Activated B cell treated with CpG ODN at 0.5 μM for 24 hours (primary cell): ENCODE measurements at regions of chr14 and their contacts with region 1.

Region 1: DNA sequence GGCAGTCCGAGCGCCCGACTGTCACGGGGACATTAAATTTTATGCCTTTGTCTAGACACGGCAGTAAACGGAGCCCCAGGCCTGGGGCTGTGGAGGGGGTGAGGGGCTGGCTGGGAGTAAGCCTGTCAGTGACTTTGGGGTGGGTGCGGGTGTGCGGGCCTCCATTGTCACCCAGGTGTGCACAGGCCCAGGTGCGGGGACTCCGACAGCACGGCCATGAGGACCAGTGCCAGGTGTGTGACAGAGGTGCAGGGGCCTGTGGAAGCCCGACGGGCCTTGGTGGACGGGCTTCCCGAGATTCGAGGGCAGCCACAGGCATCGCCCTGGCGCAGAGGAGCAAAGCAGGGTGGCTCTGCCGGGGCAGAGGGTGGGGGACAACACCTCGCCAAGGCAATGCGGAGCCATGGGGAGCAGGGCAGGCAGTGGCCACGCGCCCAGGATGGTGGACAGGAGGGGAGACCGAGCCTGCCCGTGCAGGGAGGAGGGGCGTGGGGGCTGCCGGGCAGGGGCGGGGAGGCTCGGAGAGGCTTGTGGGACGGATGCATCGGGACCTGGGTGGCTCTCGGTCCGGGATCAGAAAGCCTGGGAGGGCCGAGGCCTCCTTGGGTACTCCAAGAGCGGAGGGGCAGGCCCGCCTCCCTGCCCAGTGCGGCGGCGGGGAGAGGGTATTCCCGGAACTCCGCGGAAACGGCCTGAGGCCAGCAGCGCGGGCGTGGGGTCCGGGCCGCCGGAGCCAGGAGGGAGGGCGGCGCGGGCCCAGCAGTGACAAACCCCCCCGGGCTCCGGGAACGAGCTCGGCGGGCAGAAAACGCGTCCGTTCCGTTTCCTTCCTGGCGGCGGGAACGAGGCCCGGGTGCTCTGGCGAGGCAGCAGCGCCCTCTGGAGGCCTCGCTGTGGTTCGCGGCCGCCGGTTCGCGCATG is 1.5 kb downstream of the TMEM121 start:
- DNase-seq: peak; percentile 82
- ATAC-seq: peak; percentile 47
- H3K4me3 Mint-ChIP-seq: peak overlapping the region; percentile 68
- H3K27ac Mint-ChIP-seq: no peak overlapping the region
- H3K4me1 Mint-ChIP-seq: peaks cover 44% of the 10 kb centered on the region
- H3K27me3 Mint-ChIP-seq: peaks cover 4% of the 10 kb centered on the region
- CTCF ChIP-seq: no peak

Region 2: DNA sequence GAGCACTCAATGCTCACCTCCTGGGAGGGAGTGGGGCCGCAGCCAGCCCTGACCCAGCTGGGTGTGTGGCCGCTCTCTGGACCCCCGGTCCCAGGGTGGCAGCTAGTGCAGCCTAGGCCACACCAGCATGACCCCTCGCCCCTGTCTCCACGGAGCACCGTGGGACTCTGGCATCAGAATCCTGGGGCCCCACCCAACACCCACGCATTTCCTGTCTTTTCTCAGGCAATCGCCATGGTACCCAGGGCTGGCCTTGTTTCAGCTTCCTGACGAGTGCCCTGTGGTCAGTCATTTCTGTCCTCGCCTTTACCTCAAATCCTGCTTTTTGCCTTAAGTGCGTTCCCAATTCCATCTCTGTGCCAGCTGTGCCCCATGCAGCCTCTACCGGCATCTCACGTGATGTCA is 197.4 kb before region 1 on chr14:
- CTCF ChIA-PET with region 1: no interaction called
- POLR2A ChIA-PET with region 1: no interaction called
- intact Hi-C with region 1: no loop called
- DNase-seq: no peak
- ATAC-seq: no peak
- H3K4me3 Mint-ChIP-seq: no peak overlapping the region
- H3K27ac Mint-ChIP-seq: no peak overlapping the region
- H3K4me1 Mint-ChIP-seq: peaks cover 20% of the 10 kb centered on the region
- H3K27me3 Mint-ChIP-seq: no peaks in the 10 kb centered on the region
- CTCF ChIP-seq: no peak

Region 3: DNA sequence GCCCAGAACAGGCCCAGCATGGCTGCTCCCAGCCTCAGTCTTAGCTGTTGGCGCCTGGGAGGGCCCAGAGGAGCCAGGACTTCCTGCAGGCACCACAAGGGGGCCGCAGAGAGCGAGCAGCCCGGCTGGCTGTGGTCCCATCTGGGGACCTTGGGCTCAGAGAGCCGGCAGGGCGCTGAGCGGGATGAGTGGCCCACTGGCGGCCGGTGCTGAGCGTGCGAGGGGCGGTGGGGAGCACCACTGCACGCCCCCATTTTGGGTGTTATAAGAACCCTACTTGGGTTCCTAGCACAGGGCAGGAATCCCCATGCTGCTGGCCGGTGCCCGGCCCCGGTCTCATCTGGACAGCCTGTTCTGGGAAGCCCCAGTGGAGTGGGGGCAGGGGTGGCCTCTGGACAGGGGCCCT is 79.2 kb before region 1 on chr14:
- CTCF ChIA-PET with region 1: interaction called, 4 read pairs
- POLR2A ChIA-PET with region 1: no interaction called
- intact Hi-C with region 1: loop called (anchors 1 kb)
- DNase-seq: peak; percentile 63
- ATAC-seq: peak; percentile 97
- H3K4me3 Mint-ChIP-seq: no peak overlapping the region
- H3K27ac Mint-ChIP-seq: no peak overlapping the region
- H3K4me1 Mint-ChIP-seq: no peaks in the 10 kb centered on the region
- H3K27me3 Mint-ChIP-seq: no peaks in the 10 kb centered on the region
- CTCF ChIP-seq: peak; percentile 20

Region 4: DNA sequence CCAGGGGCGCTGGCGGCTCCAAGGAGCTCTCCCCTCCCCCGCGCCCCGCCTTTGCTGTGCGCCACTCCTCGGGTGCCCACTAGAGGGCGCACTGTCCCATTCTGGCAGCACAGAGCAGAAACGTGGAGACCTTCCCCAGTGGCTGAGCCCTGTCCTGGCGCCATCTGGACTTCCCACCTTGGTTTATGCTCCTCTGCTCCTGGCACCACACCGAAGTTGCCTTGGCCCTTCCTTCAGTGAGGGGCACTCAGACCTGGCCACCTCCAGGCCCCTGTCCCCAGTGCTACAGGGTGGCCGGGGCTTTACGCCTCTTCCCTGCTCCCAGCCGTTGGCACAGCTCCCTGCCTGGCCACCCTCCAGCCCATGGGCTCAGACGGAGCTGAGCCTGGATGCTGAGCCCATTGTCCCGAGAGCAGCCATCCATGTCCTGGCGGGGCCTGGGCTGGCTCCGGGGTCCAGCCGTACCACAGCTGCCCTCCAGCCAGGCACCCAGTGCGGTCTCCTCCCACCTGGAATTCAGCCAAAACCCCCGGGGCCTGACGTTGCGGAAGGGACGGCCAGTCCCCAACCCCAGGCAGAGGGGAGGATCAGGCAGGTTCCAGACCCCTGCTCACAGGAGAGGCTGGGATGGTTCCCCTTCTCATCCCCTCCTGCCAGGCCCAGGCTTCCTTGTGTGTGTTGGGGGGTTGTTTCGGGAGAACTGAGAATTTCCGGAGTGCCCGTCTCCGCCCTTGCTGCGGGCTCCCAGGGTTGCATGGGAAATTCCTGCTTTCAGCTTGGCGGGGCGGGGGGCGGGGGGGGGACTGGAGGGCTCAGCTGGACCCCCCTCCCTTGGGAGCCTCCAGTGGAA is 46.7 kb before region 1 on chr14:
- CTCF ChIA-PET with region 1: interaction called, 11 read pairs
- POLR2A ChIA-PET with region 1: interaction called, 3 read pairs
- intact Hi-C with region 1: loop called (anchors 2 kb)
- DNase-seq: peak; percentile 93
- ATAC-seq: peak; percentile 60
- H3K4me3 Mint-ChIP-seq: peak overlapping the region; percentile 75
- H3K27ac Mint-ChIP-seq: peak overlapping the region; percentile 94
- H3K4me1 Mint-ChIP-seq: peaks cover 73% of the 10 kb centered on the region
- H3K27me3 Mint-ChIP-seq: peaks cover 3% of the 10 kb centered on the region
- CTCF ChIP-seq: peak; percentile 49